ENCODE measurements at regions of chr6 and their contacts with region 1.

Region 1: GRCh38 chr6:79713701-79714322 is 82.7 kb downstream of the SH3BGRL2 start:
- DNase-seq: no peak
- H3K4me3 Mint-ChIP-seq: no peak overlapping the region
- H3K27ac Mint-ChIP-seq: no peak overlapping the region
- H3K4me1 Mint-ChIP-seq: no peaks in the 10 kb centered on the region
- H3K27me3 Mint-ChIP-seq: peaks cover 5% of the 10 kb centered on the region

Region 2: DNA sequence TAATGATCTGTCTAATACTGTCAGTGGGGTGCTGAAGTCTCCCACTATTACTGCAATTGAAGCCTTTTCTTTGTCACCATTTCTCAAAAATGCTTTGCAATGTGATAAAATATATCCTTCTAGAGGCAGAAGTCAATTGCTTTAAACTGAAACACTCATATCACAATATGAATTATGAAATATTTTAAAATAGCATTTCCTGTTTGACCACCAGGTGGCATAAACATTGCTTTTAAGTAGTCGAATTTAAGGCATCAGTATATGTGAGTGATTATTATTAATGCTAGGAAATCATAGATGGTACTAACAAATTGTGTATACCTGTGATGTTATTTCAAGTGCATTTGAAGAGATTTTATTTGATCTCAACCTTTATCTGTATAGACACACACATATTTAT is 1973.4 kb before region 1 on chr6:
- intact Hi-C with region 1: loop called (anchors 5 kb)
- DNase-seq: no peak
- H3K4me3 Mint-ChIP-seq: no peak overlapping the region
- H3K27ac Mint-ChIP-seq: no peak overlapping the region
- H3K4me1 Mint-ChIP-seq: no peaks in the 10 kb centered on the region
- H3K27me3 Mint-ChIP-seq: no peaks in the 10 kb centered on the region